Panc1 (cell line): ENCODE measurements at regions of chr1 and their contacts with region 1.

Region 1: DNA sequence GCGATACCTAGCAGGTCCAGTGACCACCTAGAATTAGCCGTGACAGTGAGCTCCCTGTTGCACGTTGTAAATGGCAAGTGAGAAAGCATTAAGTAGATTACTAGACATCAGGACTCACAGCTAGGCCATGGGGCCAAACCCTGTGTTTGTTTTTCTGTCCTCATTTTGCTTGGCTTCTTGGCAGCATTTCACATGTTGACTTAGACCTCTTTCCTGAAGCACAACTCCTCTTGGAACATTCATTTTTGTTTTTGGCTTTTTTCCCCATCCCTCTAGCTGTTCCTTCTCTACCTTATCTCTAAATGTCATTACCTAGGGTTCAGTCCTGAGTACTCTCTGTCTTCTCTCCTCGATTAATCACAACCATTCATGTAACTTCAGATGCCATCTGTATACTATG is 16.9 kb upstream of the PTPN14 start:
- DNase-seq: no peak
- ATAC-seq: no peak
- H3K4me3 ChIP-seq: no peak overlapping the region
- H3K27ac ChIP-seq: peak overlapping the region; percentile 72
- H3K4me1 ChIP-seq: peaks cover 48% of the 10 kb centered on the region
- H3K27me3 ChIP-seq: no peaks in the 10 kb centered on the region
- CTCF ChIP-seq: no peak

Region 2: DNA sequence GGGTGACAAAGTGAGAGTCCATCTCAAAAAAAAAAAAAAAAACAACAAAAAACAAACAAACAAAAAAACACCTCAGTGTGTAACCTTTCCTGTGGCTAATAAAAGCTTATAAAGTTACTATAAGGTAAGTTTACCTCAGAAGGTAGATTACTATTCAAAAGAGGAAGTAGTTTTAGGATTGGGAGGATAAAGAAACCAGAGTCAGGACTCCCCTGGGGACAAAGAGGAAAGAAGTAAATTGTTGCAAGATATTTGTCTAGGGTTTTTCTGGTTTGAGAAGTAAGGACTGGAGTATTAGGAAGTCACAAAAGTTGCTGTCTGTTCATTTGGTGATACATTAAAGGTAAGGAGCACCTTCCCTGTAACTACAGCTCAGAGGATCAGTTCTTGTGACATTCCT is 10.9 kb after region 1 on chr1:
- CTCF ChIA-PET with region 1: interaction called, 3 read pairs
- POLR2A ChIA-PET with region 1: interaction called, 13 read pairs
- in situ Hi-C with region 1: no loop called
- intact Hi-C with region 1: no loop called
- DNase-seq: no peak
- ATAC-seq: no peak
- H3K4me3 ChIP-seq: no peak overlapping the region
- H3K27ac ChIP-seq: peak overlapping the region; percentile 69; the same call in 1 of the 2 replicates
- H3K4me1 ChIP-seq: peaks cover 38% of the 10 kb centered on the region
- H3K27me3 ChIP-seq: no peaks in the 10 kb centered on the region
- CTCF ChIP-seq: no peak

Region 3: DNA sequence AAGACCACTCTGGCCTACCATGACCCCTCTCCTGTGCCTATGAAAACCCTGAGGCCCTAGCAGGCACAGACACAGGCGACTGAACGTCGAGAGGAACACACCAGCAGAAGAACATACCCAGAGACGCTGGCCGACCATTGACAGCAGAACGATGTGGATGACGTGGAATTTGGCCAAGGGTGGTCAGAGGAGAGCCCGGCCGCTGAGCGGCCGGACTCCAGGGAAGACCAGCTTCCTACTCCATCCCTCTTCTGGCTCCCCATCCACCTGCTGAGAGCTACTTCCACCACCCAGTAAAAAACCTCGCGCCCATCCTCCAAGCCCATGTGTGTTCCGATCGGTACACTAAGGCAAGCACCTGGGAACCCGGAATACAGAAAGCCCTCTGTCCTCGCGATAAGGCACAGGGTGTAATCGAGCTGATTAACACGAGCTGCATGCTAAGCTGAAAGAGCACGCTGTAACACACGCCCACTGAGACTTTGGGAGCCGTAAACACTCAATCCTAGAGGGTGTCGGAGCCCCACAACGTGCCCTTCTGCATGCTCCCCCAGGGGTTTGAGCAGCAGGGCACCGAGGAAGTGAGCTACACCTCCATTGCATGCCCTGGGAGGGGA is 185.0 kb after region 1 on chr1:
- CTCF ChIA-PET with region 1: no interaction called
- POLR2A ChIA-PET with region 1: no interaction called
- in situ Hi-C with region 1: no loop called
- intact Hi-C with region 1: no loop called
- DNase-seq: no peak
- ATAC-seq: no peak
- H3K4me3 ChIP-seq: no peak overlapping the region
- H3K27ac ChIP-seq: no peak overlapping the region
- H3K4me1 ChIP-seq: no peaks in the 10 kb centered on the region
- H3K27me3 ChIP-seq: no peaks in the 10 kb centered on the region
- CTCF ChIP-seq: no peak